A673 (cell line): ENCODE measurements at regions of chr2 and their contacts with region 1.

Region 1: DNA sequence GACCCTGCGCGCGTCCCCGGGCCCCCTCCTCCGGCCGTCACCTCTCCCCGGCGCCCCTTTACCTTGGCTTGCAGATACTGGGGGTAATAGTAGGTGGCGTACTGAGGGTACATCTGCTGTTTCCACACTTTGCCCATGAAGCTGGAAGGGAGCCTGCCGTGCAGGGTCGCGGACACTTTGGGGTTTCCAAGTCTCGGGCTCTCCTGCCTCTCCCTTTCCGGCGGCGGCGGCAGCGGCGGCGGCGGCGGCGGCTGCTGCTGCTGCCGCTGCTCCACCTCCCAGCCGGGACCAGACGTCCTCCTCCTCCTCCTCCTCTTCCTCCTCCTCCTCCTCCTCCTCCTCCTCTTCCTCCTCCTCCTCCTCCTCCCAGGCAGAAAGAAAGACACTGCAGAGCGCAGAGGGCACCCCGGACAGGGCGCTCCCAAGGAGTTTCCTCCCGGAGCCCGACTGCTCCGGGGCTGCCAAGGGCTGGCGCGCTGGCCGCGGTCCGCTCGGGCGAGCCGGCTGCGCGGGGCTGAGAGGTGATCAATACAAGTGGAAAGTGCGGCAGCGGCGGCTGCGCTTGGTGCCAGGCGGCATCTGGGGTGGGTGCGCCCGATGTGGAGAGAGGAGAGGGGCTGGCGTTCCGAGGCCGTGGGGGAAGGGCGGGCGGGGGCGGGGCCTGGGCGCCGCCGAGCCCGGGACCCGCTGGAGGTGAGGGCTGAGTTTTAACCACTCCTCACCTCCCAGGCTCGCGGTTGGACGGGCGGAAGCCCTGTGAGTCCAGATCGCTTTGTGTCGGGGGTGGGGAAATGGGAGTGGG is at the start of gene RBMS1:
- DNase-seq: peak; percentile 69
- H3K4me3 ChIP-seq: peak within 1 kb of the TSS; percentile 97
- H3K27ac ChIP-seq: peak within 1 kb of the TSS; percentile 93
- H3K4me1 ChIP-seq: peaks cover 28% of the 10 kb centered on the region
- H3K27me3 ChIP-seq: no peaks in the 10 kb centered on the region
- CTCF ChIP-seq: no peak
- total RNA-seq, gene RBMS1: 80.5 and 84.9 TPM in 2 replicates

Region 2: GRCh38 chr2:159840616-159841015 is 652.8 kb before region 1 on chr2:
- CTCF ChIA-PET with region 1: no interaction called
- POLR2A ChIA-PET with region 1: no interaction called
- intact Hi-C with region 1: no loop called
- DNase-seq: no peak
- H3K4me3 ChIP-seq: no peak overlapping the region
- H3K27ac ChIP-seq: no peak overlapping the region
- H3K4me1 ChIP-seq: no peaks in the 10 kb centered on the region
- H3K27me3 ChIP-seq: peaks cover 25% of the 10 kb centered on the region
- CTCF ChIP-seq: no peak

Region 3: DNA sequence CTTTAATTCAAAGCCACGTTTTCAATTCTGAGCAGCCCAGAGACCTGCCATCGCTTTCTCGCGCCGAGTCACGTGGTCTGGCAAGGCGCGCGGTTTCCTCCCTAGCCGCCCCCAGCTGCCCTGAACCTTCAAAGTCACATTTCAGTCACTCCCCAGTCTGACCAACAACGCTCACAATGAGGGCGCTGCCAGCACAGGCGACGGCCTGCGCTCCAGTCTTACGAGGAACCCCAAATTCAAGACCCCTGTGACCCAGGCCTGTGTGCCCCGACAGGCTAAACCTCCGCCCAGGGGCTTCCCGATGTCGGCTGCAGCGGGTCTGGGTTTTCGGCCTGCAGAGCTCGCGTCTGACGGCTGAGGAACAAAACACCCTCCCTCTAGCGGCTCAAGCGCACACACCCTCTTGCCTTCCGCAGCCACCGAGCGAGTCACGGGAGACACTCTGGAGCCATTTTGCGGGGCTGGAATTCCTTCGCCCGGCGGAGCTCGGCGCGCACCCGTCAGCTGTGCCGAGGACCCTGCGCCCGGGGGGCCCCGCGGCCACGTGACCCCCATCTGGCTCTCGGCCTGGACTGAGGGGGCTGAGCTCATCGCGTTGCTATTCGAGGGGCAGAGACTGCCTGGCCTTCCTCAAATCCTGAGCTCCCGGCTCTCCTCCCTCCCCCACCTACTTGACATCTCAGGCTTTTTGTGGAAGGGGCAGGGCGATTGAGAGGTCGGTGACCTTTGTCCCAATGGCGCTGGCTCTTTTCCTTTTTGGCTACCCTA is 223.4 kb before region 1 on chr2:
- CTCF ChIA-PET with region 1: no interaction called
- POLR2A ChIA-PET with region 1: no interaction called
- intact Hi-C with region 1: loop called (anchors 10 kb)
- DNase-seq: peak; percentile 87
- H3K4me3 ChIP-seq: peak overlapping the region; percentile 37
- H3K27ac ChIP-seq: peak overlapping the region; percentile 35
- H3K4me1 ChIP-seq: peaks cover 3% of the 10 kb centered on the region
- H3K27me3 ChIP-seq: no peaks in the 10 kb centered on the region
- CTCF ChIP-seq: peak; percentile 64

Region 4: DNA sequence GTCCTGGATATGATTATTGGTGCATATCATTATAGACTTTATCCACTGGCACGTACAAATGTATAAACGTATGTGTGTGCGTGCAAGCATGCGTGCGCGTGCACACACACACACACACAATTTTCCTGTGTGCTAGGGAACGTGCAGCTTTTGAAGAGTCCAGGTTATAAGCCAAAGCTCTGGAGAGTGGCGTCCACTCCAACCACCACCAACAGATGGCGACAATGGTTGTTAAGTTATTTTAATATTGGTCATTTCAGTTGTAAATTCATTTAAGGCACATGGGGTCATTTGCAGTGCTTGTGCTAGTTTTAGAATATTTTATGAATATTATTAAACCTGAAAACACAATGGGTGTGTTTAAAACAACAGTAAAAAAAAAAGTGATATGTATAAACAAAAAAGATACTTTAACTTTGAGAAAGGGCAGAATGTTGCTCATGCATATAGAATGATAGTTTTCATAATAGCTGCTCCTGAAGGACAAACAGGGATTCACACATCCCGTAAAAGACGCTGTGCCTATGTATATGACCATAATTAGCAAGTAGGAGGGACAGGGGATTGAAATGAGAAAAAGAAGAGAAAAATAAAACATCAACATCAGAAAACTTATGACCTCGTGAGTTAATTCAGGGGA is 169.1 kb before region 1 on chr2:
- CTCF ChIA-PET with region 1: no interaction called
- POLR2A ChIA-PET with region 1: no interaction called
- intact Hi-C with region 1: loop called (anchors 5 kb)
- DNase-seq: peak; percentile 61
- H3K4me3 ChIP-seq: no peak overlapping the region
- H3K27ac ChIP-seq: no peak overlapping the region
- H3K4me1 ChIP-seq: peaks cover 36% of the 10 kb centered on the region
- H3K27me3 ChIP-seq: no peaks in the 10 kb centered on the region
- CTCF ChIP-seq: peak; percentile 82

Region 5: GRCh38 chr2:160406591-160407392 is 86.6 kb before region 1 on chr2:
- CTCF ChIA-PET with region 1: interaction called, 3 read pairs
- POLR2A ChIA-PET with region 1: no interaction called
- intact Hi-C with region 1: loop called (anchors 5 kb)
- DNase-seq: peak; percentile 83
- H3K4me3 ChIP-seq: peak overlapping the region; percentile 85
- H3K27ac ChIP-seq: peak overlapping the region; percentile 83
- H3K4me1 ChIP-seq: peaks cover 69% of the 10 kb centered on the region
- H3K27me3 ChIP-seq: no peaks in the 10 kb centered on the region
- CTCF ChIP-seq: no peak

Region 6: DNA sequence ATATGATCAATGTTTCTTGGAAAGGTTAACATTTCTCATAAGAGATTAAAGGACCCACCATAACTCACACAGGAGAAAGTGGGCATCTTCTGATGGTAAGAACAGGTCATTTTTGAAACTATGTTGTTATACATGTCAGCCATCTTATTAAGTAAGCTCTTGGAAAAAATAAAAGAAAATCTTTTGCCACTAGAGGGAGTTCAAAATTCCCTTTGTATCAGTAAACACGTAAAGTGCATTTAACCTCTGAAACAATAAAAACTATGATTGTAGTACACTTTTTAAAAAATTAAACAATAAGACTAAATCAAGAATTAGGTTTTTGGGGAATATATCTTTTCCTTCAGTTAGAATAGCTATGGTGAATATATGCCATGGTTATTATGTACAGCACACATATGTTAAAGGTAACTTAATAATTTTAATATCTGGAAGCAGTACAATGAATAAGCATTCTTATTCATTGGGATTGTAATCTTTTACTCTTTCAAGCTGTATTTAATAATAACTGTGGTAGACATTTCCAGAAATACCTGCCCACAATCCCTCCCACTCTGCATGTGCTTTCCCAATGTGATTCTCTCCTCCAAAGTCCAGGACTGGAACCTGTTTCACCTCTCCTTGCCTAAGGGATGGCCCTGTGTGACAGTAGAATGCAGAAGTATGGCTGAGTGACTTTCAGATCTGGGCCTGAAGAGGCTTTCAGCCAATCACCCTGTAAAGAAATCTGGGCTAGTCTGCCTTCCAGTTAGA is 64.0 kb before region 1 on chr2:
- CTCF ChIA-PET with region 1: no interaction called
- POLR2A ChIA-PET with region 1: interaction called, 6 read pairs
- intact Hi-C with region 1: loop called (anchors 5 kb)
- DNase-seq: peak; percentile 87
- H3K4me3 ChIP-seq: peak overlapping the region; percentile 35
- H3K27ac ChIP-seq: peak overlapping the region; percentile 90
- H3K4me1 ChIP-seq: peaks cover 68% of the 10 kb centered on the region
- H3K27me3 ChIP-seq: no peaks in the 10 kb centered on the region
- CTCF ChIP-seq: peak; percentile 70